OCI-LY7 (cell line): ENCODE measurements at regions of chr17 and their contacts with region 1.

Region 1: GRCh38 chr17:50094753-50095619 is at the start of gene PDK2:
- DNase-seq: peak; percentile 97
- H3K4me3 ChIP-seq: peak within 1 kb of the TSS; percentile 94
- H3K27ac ChIP-seq: peak within 1 kb of the TSS; percentile 57
- H3K4me1 ChIP-seq: peaks cover 20% of the 10 kb centered on the region
- CTCF ChIP-seq: no peak
- total RNA-seq, gene PDK2: 10.4 and 21.8 TPM in 2 replicates

Region 2: GRCh38 chr17:49748791-49749190 is 346.2 kb before region 1 on chr17:
- CTCF ChIA-PET with region 1: no interaction called
- POLR2A ChIA-PET with region 1: no interaction called
- intact Hi-C with region 1: no loop called
- DNase-seq: peak; percentile 90
- H3K4me3 ChIP-seq: peak overlapping the region; percentile 67
- H3K27ac ChIP-seq: peak overlapping the region; percentile 94
- H3K4me1 ChIP-seq: peaks cover 93% of the 10 kb centered on the region
- CTCF ChIP-seq: no peak

Region 3: GRCh38 chr17:50026901-50027630 is 67.9 kb before region 1 on chr17:
- CTCF ChIA-PET with region 1: no interaction called
- POLR2A ChIA-PET with region 1: no interaction called
- intact Hi-C with region 1: loop called (anchors 2 kb)
- DNase-seq: peak; percentile 64
- H3K4me3 ChIP-seq: no peak overlapping the region
- H3K27ac ChIP-seq: no peak overlapping the region
- H3K4me1 ChIP-seq: peaks cover 4% of the 10 kb centered on the region
- CTCF ChIP-seq: peak; percentile 96

Region 4: DNA sequence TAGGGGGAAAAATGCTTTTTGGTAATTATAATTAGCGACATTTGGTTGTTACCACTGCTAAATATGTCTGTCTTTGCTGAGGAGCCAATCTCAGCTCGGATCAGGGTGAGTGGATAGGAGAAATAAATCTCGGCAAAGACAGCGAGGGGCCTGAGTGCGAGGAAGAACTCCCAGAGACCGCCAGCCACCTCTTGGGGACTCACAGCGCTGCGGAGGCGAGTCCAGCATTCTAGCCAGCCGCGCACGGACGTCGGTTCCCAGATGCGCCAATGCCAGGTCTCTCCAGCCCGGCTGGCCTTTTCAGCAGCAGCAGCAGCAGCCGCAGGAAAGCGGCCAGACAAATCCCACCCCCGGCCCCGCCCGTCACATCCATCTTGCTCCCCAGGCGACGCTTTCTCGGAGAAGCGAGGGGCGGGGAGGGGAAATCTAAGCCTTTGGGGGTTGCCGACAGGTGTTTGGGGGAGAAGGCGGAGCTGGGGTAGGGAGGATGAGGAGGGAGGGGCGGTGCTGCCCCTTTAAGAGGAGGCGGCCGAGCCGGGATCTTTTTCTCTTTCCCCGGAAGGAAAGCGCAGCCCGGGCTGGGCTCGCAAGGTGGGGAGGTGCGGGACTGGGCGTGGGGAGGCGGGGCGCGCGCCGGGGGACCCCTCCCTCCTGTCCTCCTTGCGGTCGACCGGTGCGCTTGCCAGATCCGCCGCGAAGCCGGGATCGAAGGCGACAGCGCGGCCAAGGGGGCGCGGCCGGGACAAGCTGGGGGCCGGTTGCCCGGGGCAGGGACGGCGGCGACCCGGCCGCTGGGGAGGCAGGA is 39.4 kb before region 1 on chr17 and contains the start of gene ITGA3:
- CTCF ChIA-PET with region 1: interaction called, 8 read pairs
- POLR2A ChIA-PET with region 1: interaction called, 5 read pairs
- intact Hi-C with region 1: loop called (anchors 1 kb)
- DNase-seq: peak; percentile 78
- H3K4me3 ChIP-seq: peak within 1 kb of the TSS; percentile 83
- H3K27ac ChIP-seq: peak within 1 kb of the TSS; percentile 67
- H3K4me1 ChIP-seq: peaks cover 64% of the 10 kb centered on the region
- CTCF ChIP-seq: no peak
- total RNA-seq, gene ITGA3: 23.2 and 30.7 TPM in 2 replicates

Region 5: DNA sequence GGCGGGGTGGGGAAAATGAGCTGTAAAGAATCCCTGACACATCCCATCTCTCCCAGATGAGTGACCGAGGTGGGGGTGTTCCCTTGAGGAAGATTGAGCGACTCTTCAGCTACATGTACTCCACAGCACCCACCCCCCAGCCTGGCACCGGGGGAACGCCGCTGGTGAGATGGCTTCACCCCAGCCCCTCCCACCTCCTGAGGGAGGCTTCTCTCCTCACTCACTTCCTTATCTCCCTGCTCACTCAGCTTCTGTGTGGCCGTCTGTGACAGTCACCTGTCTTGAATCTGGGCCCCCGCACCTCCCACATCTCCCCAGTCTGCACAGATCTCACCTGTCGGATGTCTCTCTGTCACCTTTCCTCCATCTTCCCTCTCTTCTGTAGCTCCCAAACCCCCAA is 13.6 kb after region 1 on chr17:
- CTCF ChIA-PET with region 1: interaction called, 11 read pairs
- POLR2A ChIA-PET with region 1: no interaction called
- intact Hi-C with region 1: no loop called
- DNase-seq: no peak
- H3K4me3 ChIP-seq: no peak overlapping the region
- H3K27ac ChIP-seq: no peak overlapping the region
- H3K4me1 ChIP-seq: no peaks in the 10 kb centered on the region
- CTCF ChIP-seq: no peak

Region 6: GRCh38 chr17:50151041-50151936 is 56.3 kb after region 1 on chr17:
- CTCF ChIA-PET with region 1: interaction called, 3 read pairs
- POLR2A ChIA-PET with region 1: no interaction called
- intact Hi-C with region 1: loop called (anchors 2 kb)
- DNase-seq: peak; percentile 95
- H3K4me3 ChIP-seq: peak overlapping the region; percentile 89
- H3K27ac ChIP-seq: peak overlapping the region; percentile 87
- H3K4me1 ChIP-seq: peaks cover 44% of the 10 kb centered on the region
- CTCF ChIP-seq: peak; percentile 60

Region 7: GRCh38 chr17:50161023-50161910 is 66.3 kb after region 1 on chr17:
- CTCF ChIA-PET with region 1: no interaction called
- POLR2A ChIA-PET with region 1: interaction called, 3 read pairs
- intact Hi-C with region 1: loop called (anchors 1 kb)
- DNase-seq: peak; percentile 93
- H3K4me3 ChIP-seq: peak overlapping the region; percentile 68
- H3K27ac ChIP-seq: no peak overlapping the region
- H3K4me1 ChIP-seq: peaks cover 23% of the 10 kb centered on the region
- CTCF ChIP-seq: peak; percentile 89

Region 8: GRCh38 chr17:50200457-50201275 is 105.7 kb after region 1 on chr17:
- CTCF ChIA-PET with region 1: no interaction called
- POLR2A ChIA-PET with region 1: no interaction called
- intact Hi-C with region 1: no loop called
- DNase-seq: peak; percentile 85
- H3K4me3 ChIP-seq: peak overlapping the region; percentile 55
- H3K27ac ChIP-seq: no peak overlapping the region
- H3K4me1 ChIP-seq: peaks cover 8% of the 10 kb centered on the region
- CTCF ChIP-seq: peak; percentile 100

Region 9: GRCh38 chr17:50297407-50297865 is 202.4 kb after region 1 on chr17:
- CTCF ChIA-PET with region 1: no interaction called
- POLR2A ChIA-PET with region 1: no interaction called
- intact Hi-C with region 1: loop called (anchors 1 kb)
- DNase-seq: peak; percentile 74
- H3K4me3 ChIP-seq: no peak overlapping the region
- H3K27ac ChIP-seq: no peak overlapping the region
- H3K4me1 ChIP-seq: no peaks in the 10 kb centered on the region
- CTCF ChIP-seq: peak; percentile 81